Right ventricle myocardium inferior (tissue), 1 donor: ENCODE measurements at regions of chr12 and their contacts with region 1.

Region 1: DNA sequence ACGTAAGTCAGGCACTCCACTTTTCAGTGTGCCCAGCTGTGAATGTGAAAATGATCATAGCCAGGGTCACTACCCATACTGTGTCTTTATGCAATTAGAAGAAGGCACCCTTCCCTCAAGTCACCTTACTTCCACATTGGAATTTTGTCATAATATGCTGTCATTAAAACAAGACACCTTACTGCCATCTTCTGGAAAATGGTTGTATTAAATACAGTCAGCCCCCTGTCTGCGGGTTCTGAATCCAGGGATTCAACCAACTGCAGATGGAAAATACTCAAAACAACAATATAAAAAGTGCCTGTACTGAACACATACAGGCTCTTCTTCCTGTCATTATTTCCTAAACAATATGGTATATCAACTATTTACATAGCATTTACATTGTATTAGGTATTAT is 70.2 kb upstream of the TBX5 start:
- DNase-seq: no peak
- ATAC-seq: peak; percentile 48

Region 2: DNA sequence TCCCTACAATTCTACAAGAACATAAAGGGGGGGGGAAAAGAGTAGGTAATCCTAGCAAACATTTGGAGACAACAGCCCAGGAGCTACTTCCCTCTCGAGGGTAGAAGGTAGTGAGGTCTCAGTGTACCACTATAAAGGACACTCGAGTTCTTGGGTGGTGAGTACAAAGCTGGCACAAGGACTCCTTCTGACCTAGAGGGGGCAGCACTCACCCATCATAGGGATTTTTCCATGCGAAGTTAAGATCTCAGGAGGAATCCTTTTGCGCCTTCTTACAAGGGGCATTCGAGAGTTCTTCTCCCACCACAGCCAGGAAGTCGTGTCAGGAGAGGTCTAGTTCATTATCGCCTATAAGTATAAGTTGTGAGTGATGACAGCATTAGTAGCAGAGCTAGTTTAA is 309.8 kb before region 1 on chr12:
- intact Hi-C with region 1: loop called (anchors 2 kb)
- DNase-seq: no peak
- ATAC-seq: peak; percentile 57

Region 3: DNA sequence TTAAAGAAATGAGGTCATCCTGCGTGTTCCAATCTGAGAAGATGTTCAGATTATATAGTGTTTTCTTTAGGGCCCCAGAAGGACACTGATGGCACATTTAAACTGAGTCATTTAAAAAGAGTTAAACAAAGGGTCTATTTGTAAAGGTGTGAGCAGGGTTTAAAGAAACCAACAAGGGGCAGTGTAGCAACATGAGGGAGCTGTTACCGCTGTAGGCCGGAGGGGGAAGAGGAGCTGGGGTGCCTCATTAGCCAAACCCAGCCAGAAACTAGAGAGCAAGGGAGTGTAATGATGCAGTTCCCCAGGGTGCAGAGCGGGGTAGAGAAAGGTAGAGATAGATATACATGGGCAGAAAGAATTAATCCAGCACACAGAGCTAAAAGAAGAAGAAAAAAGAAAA is 230.6 kb before region 1 on chr12:
- intact Hi-C with region 1: loop called (anchors 5 kb)
- DNase-seq: no peak
- ATAC-seq: peak; percentile 40

Region 4: GRCh38 chr12:114355389-114356088 is 120.6 kb before region 1 on chr12:
- intact Hi-C with region 1: loop called (anchors 10 kb)
- DNase-seq: peak; percentile 69
- ATAC-seq: peak; percentile 70

Region 5: GRCh38 chr12:114408886-114409851 is 67.0 kb before region 1 on chr12:
- intact Hi-C with region 1: loop called (anchors 5 kb)
- DNase-seq: peak; percentile 83
- ATAC-seq: peak; percentile 60

Region 6: GRCh38 chr12:114520236-114520635 is 44.1 kb after region 1 on chr12:
- intact Hi-C with region 1: no loop called
- DNase-seq: no peak
- ATAC-seq: no peak